ENCODE measurements at regions of chr19 and their contacts with region 1.

Region 1: DNA sequence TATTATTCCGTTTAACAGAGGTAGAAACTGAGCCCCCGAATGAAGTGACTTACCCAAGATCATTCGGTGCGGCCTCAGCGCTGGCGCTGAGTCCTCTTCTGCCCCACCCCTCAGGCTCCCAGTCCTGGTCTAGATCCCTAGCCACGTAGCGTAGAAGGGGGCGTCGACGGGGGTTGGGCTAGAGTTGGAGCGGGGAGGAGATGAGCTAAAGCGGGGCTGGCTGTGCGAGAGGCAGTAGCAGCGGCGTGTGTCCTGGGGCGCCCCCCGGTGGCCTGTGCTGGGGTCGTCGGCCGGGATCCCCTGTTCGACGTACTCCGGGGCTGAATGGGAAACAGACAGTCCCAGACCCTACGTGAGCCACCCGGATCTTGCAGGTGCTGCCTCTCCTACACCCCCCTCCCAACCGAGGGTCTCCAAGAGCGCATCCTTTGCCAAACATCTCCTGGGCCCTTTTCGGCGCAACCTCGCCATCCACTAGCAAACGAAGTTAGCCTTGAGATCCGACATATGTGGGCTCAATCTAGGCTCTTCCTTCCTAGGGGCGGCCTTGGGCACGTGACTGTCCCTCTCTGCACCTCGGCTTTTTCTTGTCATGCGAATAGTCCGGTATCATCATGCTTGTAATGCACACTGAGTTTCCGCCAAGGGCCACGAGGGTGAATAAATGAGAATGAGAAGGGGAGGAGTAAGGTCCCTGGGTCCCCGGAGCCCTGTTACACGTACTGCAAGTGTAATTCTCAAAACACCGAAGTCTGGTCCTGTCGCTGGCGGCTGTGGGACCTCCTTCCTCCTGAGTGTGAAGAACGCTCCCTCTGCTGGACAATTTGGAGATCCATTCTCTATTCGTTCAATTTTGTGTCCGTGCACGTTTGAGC is 47.7 kb downstream of the CYP4F22 start:
- DNase-seq: peak; percentile 97

Region 2: DNA sequence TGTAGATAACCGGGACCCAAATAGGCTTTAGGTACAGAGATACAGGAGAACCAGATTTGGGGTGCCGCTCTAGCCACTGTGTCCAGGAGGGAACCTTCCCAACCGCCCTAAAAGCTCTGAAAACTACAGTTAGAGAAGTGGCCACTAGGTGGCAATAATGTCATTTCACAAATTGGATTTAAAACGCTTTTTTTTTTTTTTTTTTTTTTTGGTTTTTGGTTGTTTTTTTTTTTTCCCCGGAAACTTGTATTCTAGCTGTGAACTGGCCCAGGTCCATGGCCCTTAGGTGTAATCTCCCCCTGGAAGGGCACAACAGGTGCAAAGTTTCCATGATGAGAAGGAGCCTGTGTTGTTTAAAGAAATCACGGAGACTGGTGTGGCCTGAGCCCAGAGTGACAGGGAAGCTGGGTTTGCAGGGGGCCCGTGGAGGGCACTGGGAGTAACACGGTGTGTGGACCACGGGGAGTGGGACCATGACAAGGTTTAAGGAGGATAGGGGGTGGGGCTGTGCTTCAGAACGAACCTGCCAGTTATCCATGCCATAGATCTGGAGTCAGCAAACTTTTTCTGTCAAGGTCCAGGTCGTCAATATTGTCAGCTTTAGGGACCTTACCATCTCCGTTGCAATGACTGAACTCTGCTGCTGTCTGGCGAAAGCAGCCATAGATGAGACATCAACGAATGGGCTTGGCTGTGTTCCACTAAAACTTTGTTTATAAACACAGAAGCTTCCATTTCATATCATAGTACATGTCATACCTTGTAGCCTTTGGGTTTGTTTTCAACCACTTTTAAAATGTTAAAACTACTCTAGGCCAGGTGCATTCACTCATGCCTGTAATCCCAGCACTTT is 463.9 kb before region 1 on chr19:
- intact Hi-C with region 1: loop called (anchors 5 kb)
- DNase-seq: peak; percentile 76

Region 3: GRCh38 chr19:15177269-15178116 is 378.5 kb before region 1 on chr19:
- intact Hi-C with region 1: loop called (anchors 5 to 10 kb)
- DNase-seq: peak; percentile 94

Region 4: GRCh38 chr19:15251749-15252397 is 304.1 kb before region 1 on chr19:
- intact Hi-C with region 1: loop called in 1 of 2 experiments (anchors 10 kb)
- DNase-seq: peak; percentile 96

Region 5: DNA sequence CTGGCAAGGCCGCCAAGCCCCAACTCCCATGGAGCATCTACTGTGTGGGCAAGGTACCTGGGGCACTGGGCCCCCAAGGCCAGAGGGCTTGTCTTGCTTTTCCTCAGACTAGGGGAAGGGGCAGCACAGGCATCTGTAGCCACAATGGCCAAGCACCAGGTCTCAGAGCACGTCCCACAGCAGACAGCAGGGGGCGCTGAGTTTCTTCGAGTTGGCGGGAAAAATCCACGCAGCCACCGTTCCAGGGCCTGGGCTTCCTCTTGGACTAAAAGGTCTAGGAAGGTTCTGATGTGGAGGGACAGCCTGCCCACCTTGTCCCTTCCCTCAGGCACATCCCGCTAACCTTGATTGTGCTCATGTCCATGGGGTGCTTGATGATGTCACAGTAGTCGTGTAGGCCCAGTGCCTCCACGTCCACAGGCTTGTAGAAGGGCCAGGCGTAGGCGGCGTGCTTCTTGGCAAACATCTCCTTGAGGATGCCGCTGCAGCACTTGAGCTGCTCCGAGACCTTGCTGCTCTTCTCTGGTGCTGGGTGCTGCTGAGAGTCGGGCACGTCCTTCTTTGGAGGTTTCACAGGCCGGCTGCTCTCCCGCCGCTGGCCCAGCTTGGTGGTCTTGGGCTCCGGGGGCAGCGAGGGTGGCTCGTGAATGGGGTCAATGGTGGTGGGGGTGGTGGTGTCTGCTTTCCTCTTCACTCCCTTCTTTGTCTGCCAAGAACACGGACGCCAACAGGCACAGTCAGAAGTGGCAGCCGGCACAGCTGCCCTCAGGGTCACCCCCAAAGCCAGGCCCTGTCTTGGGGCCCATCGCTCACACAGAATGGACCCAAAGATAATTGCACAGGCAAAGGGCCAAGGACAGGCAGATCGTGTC is 291.7 kb before region 1 on chr19:
- intact Hi-C with region 1: loop called (anchors 5 to 10 kb)
- DNase-seq: peak; percentile 93

Region 6: DNA sequence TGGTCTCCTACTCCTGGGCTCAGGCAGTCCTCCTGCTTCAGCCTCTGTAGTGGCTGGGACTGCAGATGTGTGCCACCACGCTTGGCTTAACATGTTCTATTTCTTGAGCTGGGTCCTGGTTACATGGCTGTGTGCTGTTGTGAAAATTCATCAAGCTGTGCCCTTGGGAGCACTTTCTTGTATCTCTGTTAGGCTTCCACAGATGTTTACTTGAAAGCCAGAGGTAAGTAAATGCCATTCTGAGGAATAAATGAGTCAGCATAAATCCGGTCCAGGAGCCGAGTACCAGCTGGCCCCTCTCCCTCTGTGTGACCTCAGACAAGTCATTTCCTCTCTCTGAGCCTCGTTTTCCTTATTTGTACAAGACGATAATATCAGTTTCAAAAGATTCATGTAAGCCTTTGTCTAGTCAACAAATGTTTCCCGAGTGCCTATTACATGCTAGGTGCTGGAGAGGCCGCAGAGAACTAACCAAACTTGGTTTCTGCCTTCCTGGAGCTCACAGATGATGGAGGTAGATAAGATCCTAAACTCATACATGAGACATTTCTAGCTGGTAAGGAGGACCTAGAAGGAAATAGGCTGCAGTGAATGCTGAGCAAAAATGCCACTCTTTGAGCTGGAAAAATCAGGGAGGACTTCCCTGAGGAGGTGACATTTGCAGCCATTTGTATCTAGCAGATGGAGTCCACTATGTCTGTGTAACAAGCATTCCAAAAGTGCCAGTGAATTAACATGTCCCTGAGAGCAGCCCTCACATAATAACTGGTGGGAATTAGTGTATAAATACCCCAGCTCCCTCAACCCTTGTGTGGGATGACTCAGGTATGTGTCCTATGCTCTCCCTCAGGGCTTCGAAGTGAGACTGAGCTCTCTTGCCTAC is 88.9 kb before region 1 on chr19:
- intact Hi-C with region 1: loop called in 1 of 2 experiments (anchors 10 kb)
- DNase-seq: no peak

Region 7: DNA sequence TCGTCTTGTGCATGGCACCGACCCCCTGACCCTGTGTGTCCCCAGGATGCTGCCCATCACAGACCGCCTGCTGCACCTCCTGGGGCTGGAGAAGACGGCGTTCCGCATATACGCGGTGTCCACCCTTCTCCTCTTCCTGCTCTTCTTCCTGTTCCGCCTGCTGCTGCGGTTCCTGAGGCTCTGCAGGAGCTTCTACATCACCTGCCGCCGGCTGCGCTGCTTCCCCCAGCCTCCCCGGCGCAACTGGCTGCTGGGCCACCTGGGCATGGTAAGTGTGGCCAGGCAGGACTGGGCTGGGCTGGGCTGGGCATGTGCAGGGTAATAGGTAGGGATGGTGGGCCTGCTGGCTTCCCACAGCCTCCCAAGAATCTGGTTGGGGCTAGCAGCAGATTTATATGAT is 30.7 kb before region 1 on chr19:
- intact Hi-C with region 1: no loop called
- DNase-seq: no peak

Region 8: GRCh38 chr19:15652559-15653278 is 96.7 kb after region 1 on chr19:
- intact Hi-C with region 1: no loop called
- DNase-seq: no peak

Measured in posterior vena cava (tissue), 2 donors.